ENCODE measurements at regions of chr3 and their contacts with region 1.

Region 1: DNA sequence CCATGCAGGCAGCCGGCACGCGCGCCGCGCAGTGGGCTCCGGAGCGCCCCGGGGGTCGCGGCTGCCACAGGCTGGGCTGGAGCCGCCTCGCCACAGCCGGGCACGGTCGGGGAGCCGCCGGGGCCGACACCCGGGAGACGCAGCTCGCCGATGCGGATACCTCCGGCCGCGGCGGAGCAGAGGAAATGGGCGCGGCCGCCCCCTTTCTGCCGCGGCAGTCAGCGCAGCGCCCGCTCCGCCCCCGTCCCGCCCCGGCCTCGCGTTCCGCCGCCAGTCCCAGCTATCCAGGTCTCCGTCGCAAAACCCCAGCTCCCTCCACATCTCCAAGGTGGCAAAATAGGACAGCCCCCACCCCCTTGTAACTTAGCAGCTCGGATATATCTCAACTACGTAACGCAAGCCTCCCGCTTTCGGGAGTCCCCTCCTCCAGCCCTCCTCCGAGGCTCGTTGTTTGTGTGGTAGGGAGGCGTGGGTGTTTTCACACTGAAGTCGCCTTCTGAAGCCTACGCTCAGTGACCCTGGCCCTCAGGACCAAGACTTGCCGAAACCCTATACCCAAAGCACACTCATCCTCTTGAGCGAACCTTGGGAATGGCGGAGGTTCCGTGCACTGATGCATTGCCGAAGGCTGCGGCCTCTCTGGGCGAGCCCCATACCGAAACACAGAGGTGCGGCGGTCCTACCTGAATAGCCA is at the start of gene SH3BP5:
- DNase-seq: peak; percentile 80
- ATAC-seq: peak; percentile 84
- H3K4me3 Mint-ChIP-seq: peak within 1 kb of the TSS; percentile 95
- H3K27ac Mint-ChIP-seq: peak within 1 kb of the TSS; percentile 96
- H3K4me1 Mint-ChIP-seq: peaks cover 62% of the 10 kb centered on the region
- H3K27me3 Mint-ChIP-seq: no peaks in the 10 kb centered on the region
- CTCF ChIP-seq: no peak
- total RNA-seq, gene SH3BP5: 60.5 and 66.0 TPM in 2 replicates

Region 2: DNA sequence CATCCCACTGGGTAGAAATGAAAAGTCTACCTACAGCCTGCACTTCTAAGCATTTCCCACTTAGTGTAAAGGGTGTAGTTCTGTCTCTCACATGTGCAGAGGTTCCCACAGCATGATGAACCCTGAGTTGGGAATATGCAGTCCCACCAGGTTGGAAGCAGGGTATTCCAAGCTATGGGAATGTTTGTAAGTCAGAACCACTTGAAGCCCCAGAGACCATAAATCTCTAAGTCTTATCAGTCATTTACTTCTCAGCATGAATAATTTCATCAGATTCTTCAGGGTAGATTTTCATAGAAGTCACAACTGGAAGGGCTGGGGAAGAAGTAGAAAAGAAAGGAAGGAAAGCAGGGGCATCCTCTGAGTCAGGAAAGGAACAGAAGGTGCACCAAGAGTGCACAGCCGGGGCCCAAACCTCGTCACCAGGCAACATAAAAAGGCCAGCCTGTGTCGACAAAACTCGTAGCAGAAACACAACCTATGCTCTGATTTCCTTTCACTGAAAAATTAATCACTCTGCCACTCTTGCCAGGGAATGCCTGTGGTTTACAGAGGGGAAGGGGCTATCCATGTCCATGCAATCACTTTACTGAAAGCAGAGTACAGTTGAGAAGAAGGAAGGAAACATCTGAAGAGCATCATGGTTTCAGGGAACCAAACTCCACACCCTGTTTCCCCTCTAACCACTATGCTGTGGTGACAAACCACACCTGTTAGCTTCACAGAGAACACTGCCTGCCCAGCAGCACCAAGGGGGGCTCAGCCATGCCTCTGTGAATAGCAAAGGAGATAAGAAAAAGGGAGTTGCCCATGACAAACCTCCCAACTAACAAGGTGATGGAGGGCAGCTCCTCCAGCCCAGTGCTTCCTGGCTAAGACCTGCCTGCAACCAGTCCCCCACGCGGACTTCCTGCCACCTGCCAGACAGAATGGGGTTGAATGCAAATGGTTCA is 40.7 kb before region 1 on chr3:
- CTCF ChIA-PET with region 1: interaction called, 5 read pairs
- POLR2A ChIA-PET with region 1: interaction called, 15 read pairs
- intact Hi-C with region 1: loop called (anchors 1 kb)
- DNase-seq: peak; percentile 46
- ATAC-seq: peak; percentile 78
- H3K4me3 Mint-ChIP-seq: peak overlapping the region; percentile 66
- H3K27ac Mint-ChIP-seq: peak overlapping the region; percentile 91
- H3K4me1 Mint-ChIP-seq: peaks cover 97% of the 10 kb centered on the region
- H3K27me3 Mint-ChIP-seq: no peaks in the 10 kb centered on the region
- CTCF ChIP-seq: no peak

Region 3: DNA sequence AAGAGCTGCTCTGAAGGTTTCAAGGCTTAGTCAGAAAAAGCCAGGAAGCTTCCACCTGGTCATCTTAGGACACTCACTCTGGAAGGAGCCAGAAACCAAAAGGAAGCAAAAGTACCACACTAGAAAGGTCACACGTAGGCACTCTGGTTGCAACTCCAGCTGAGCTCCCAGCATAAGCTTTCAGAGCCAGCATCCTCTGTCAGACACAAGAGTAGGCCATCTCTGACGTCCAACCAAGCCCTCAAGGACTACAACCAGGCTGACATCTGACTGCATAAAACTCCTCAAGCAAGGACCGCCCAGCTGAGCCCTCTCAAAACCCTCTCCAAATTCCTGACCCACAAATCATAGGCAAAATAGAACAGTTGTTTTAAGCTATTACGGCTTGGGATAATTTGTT is 13.0 kb before region 1 on chr3:
- CTCF ChIA-PET with region 1: interaction called, 9 read pairs
- POLR2A ChIA-PET with region 1: interaction called, 13 read pairs
- intact Hi-C with region 1: loop called (anchors 1 kb)
- DNase-seq: no peak
- ATAC-seq: no peak
- H3K4me3 Mint-ChIP-seq: no peak overlapping the region
- H3K27ac Mint-ChIP-seq: peak overlapping the region; percentile 65
- H3K4me1 Mint-ChIP-seq: peaks cover 92% of the 10 kb centered on the region
- H3K27me3 Mint-ChIP-seq: no peaks in the 10 kb centered on the region
- CTCF ChIP-seq: no peak

Region 4: DNA sequence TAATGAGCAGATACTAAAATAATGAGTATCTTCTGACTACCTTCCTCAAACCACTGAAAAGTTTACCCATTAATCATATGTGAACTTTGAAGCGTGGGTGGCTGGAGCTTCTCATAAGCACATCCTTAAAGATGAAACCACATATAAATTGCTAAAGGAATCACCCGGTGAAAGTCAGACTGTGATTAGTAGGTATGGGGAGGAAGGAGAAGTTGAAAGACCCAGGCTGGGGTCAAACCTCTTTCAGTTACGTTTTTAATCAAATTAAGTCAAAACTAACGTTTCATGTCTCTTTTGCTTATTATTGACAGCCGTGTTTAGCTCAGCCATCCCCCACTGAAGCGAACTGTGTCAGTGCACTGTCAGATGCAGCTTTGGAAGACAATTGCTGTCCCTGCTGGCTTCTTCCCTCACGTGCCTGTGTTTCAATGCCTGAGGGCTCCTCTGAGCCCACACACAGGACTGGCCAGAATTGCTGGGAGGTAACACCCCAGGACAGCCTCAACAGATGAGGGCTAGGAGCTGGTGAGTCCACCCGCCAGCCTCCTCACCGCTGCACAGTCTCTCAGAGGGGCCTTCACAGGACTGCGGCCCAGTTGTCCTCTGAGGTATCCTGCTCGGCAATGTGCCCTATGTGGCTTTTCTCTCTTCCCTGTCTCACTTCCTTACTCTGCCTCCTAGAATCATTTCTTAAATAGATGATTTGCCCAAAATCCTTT is 29.1 kb after region 1 on chr3:
- CTCF ChIA-PET with region 1: interaction called, 23 read pairs
- POLR2A ChIA-PET with region 1: interaction called, 20 read pairs
- intact Hi-C with region 1: loop called (anchors 1 kb)
- DNase-seq: peak; percentile 44
- ATAC-seq: peak; percentile 70
- H3K4me3 Mint-ChIP-seq: peak overlapping the region; percentile 64
- H3K27ac Mint-ChIP-seq: peak overlapping the region; percentile 74
- H3K4me1 Mint-ChIP-seq: peaks cover 65% of the 10 kb centered on the region
- H3K27me3 Mint-ChIP-seq: no peaks in the 10 kb centered on the region
- CTCF ChIP-seq: no peak

Region 5: DNA sequence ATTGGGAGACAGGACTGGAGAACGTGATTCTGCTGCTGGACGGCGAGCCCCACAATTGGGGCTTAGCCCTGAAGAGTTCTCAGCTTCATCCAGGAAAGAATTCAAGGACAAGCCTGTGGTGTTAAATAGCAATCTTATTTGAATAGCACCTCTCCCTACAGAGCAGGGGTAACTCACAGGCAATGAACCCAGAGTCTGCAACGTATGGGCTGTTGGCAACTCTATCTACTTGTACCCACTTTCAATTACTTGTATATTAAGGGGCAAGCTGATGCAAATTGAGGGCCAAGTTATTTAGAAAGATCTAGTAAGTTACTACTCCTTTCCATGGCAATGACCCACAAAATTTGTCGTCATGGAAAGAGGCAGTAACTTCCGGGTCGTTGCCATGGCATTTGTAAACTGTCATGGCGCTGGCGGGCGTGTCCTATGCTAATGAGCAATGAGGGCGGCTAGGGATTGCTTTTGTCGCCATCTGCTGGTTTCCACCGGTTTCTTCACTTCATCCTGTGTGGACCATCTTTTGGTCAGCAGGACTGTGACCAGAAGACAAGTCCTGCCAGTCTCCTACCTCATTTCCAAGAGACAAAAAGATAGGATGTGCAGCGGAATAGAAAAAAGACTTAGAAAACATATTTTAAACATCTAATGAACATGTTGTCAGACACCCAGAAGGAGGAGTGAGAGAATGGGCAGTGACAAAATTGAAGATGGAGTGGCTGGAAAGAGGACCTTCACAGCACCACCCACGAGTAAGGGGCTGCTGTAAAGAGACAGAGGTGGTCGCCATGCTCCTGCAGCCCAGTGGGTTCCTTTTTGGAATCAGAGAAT is 45.6 kb after region 1 on chr3:
- CTCF ChIA-PET with region 1: interaction called, 11 read pairs
- POLR2A ChIA-PET with region 1: interaction called, 17 read pairs
- intact Hi-C with region 1: loop called (anchors 1 kb)
- DNase-seq: peak; percentile 88
- ATAC-seq: peak; percentile 94
- H3K4me3 Mint-ChIP-seq: peak overlapping the region; percentile 44
- H3K27ac Mint-ChIP-seq: peak overlapping the region; percentile 91
- H3K4me1 Mint-ChIP-seq: peaks cover 29% of the 10 kb centered on the region
- H3K27me3 Mint-ChIP-seq: no peaks in the 10 kb centered on the region
- CTCF ChIP-seq: no peak

Region 6: GRCh38 chr3:15399970-15400369 is 67.4 kb after region 1 on chr3:
- CTCF ChIA-PET with region 1: interaction called, 11 read pairs
- POLR2A ChIA-PET with region 1: interaction called, 4 read pairs
- intact Hi-C with region 1: loop called (anchors 1 kb)
- DNase-seq: no peak
- ATAC-seq: no peak
- H3K4me3 Mint-ChIP-seq: no peak overlapping the region
- H3K27ac Mint-ChIP-seq: no peak overlapping the region
- H3K4me1 Mint-ChIP-seq: peaks cover 40% of the 10 kb centered on the region
- H3K27me3 Mint-ChIP-seq: no peaks in the 10 kb centered on the region
- CTCF ChIP-seq: no peak

Region 7: GRCh38 chr3:15557511-15557946 is 225.0 kb after region 1 on chr3:
- CTCF ChIA-PET with region 1: no interaction called
- POLR2A ChIA-PET with region 1: no interaction called
- intact Hi-C with region 1: loop called (anchors 2 kb)
- DNase-seq: peak; percentile 19
- ATAC-seq: peak; percentile 81
- H3K4me3 Mint-ChIP-seq: no peak overlapping the region
- H3K27ac Mint-ChIP-seq: no peak overlapping the region
- H3K4me1 Mint-ChIP-seq: peaks cover 29% of the 10 kb centered on the region
- H3K27me3 Mint-ChIP-seq: no peaks in the 10 kb centered on the region
- CTCF ChIP-seq: no peak